Natural killer cell (primary cell): ENCODE measurements at regions of chr12 and their contacts with region 1.

Region 1: GRCh38 chr12:125183187-125184067 is 118.2 kb downstream of the AACS start:
- DNase-seq: peak; percentile 74 to 86
- ATAC-seq: peak; percentile 87 to 93 (median 90)
- H3K4me3 ChIP-seq: no peak overlapping the region
- H3K4me3 Mint-ChIP-seq: peak overlapping the region; percentile 17
- H3K27ac ChIP-seq: no peak overlapping the region
- H3K27ac Mint-ChIP-seq: no peak overlapping the region
- H3K4me1 ChIP-seq: peaks cover 10% of the 10 kb centered on the region
- H3K4me1 Mint-ChIP-seq: peaks cover 0 to 5% of the 10 kb centered on the region in 2 donors
- H3K27me3 ChIP-seq: peaks cover 14% of the 10 kb centered on the region
- H3K27me3 Mint-ChIP-seq: peaks cover 33 to 36% of the 10 kb centered on the region in 2 donors
- CTCF ChIP-seq: peak; percentile 99

Region 2: DNA sequence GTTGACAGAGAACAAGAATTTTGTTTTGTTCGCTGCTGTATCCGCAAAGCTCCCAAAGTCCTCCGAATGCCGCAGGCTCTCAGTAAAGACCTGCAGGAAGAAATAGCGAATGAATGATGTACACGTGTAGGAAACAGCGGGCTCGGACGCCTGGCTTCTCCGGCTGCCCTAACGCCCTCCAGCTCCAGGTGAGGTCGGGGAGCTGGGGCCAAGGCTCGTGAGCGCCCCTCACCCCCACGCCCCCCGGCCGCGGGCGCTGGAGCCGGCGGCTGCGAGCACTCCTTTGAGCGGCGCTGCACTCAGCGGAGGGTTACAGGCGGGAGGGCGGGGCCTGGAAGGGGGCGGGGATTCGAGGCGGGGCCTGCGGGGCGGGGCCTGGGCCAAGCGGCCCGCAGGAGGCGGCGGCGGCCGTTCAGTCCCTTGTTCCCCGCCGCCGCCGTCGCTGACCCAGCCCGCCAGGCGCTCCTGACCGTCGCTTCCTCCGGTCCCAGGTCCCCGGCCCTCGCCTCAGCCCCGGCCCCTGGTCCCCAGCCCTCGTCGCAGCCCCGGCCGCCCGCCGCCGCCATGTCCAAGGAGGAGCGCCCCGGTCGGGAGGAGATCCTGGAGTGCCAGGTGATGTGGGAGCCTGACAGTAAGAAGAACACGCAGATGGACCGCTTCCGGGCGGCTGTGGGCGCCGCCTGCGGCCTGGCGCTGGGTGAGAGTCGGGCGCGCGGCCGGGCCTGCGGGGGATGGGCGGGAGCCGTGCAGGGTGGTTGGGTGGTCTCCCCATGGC is 118.2 kb before region 1 on chr12 and contains the start of gene AACS:
- intact Hi-C with region 1: no loop called
- DNase-seq: peak; percentile 64 to 86
- ATAC-seq: peak; percentile 98
- H3K4me3 ChIP-seq: peak within 1 kb of the TSS; percentile 55
- H3K4me3 Mint-ChIP-seq: peak within 1 kb of the TSS; percentile 89
- H3K27ac ChIP-seq: no peak within 1 kb of the TSS
- H3K27ac Mint-ChIP-seq: peak within 1 kb of the TSS in 1 of 2 donors; percentile 78
- H3K4me1 ChIP-seq: peaks cover 12% of the 10 kb centered on the region
- H3K4me1 Mint-ChIP-seq: peaks cover 8 to 23% of the 10 kb centered on the region in 2 donors
- H3K27me3 ChIP-seq: no peaks in the 10 kb centered on the region
- H3K27me3 Mint-ChIP-seq: peaks cover 0 to 7% of the 10 kb centered on the region in 2 donors
- CTCF ChIP-seq: no peak
- total RNA-seq, gene AACS: 14.6 to 20.4 (median 18.1) TPM

Region 3: GRCh38 chr12:125402874-125403789 is 219.7 kb after region 1 on chr12:
- intact Hi-C with region 1: loop called (anchors 2 kb)
- DNase-seq: peak in 1 of 2 donors; percentile 30
- ATAC-seq: no peak
- H3K4me3 ChIP-seq: no peak overlapping the region
- H3K4me3 Mint-ChIP-seq: no peak overlapping the region
- H3K27ac ChIP-seq: no peak overlapping the region
- H3K27ac Mint-ChIP-seq: no peak overlapping the region
- H3K4me1 ChIP-seq: no peaks in the 10 kb centered on the region
- H3K4me1 Mint-ChIP-seq: no peaks in the 10 kb centered on the region
- H3K27me3 ChIP-seq: no peaks in the 10 kb centered on the region
- H3K27me3 Mint-ChIP-seq: peaks cover 2 to 8% of the 10 kb centered on the region in 2 donors
- CTCF ChIP-seq: peak; percentile 31

Region 4: DNA sequence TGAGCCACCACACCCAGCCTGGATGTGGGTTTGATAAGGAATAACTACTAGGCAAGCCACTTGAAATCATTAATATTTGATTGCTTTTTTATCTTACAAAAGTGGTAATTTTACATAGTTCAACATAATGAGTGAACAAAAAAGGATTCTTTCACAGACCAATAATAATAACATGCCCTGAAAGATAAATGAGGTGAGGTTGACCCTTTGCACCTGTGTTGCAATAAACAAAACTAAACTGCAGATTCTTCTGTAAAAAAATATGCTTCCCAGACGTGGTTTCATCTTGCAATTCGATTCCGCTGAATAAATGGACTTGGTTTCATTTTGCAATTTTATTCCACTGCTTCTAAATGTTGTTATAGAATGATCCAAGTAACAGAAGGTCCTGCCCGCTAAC is 1568.6 kb after region 1 on chr12:
- intact Hi-C with region 1: loop called (anchors 10 kb)
- DNase-seq: no peak
- ATAC-seq: no peak
- H3K4me3 ChIP-seq: no peak overlapping the region
- H3K4me3 Mint-ChIP-seq: no peak overlapping the region
- H3K27ac ChIP-seq: no peak overlapping the region
- H3K27ac Mint-ChIP-seq: no peak overlapping the region
- H3K4me1 ChIP-seq: no peaks in the 10 kb centered on the region
- H3K4me1 Mint-ChIP-seq: no peaks in the 10 kb centered on the region
- H3K27me3 ChIP-seq: no peaks in the 10 kb centered on the region
- H3K27me3 Mint-ChIP-seq: peaks cover 0 to 3% of the 10 kb centered on the region in 2 donors
- CTCF ChIP-seq: no peak

Region 5: DNA sequence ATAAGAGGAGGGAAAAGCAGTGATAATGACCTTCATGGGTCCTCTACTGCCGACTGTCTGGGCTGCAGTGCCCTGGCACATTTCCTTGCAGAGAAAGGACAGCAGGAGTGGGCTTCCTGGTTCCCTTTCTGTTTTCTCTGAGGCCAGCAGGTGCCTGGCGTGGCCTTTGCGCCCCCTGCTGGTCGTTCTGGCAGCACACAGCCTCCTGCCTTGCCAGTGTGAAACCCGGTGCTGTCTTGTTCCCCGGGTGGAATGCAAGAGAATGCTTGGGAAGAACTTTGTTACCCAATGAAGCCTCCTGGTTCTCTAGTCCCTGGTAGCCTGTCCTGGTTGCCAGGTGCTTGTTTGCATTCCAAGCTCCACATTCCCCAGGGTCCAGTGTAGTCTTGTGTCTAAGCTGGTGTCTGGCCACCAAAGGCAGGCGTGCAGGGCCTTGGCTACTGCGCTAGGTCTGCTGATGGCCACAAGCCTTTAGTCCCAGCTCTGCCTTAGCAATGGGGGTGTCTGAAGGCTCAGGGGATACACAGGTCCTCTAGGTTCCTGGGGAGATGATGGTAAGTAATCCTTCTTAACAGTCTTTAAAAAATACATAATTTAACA is 1691.1 kb after region 1 on chr12:
- intact Hi-C with region 1: loop called (anchors 10 kb)
- DNase-seq: peak; percentile 44 to 75
- ATAC-seq: peak in 1 of 3 donors; percentile 57
- H3K4me3 ChIP-seq: no peak overlapping the region
- H3K4me3 Mint-ChIP-seq: no peak overlapping the region
- H3K27ac ChIP-seq: no peak overlapping the region
- H3K27ac Mint-ChIP-seq: no peak overlapping the region
- H3K4me1 ChIP-seq: peaks cover 5% of the 10 kb centered on the region
- H3K4me1 Mint-ChIP-seq: peaks cover 0 to 4% of the 10 kb centered on the region in 2 donors
- H3K27me3 ChIP-seq: no peaks in the 10 kb centered on the region
- H3K27me3 Mint-ChIP-seq: no peaks in the 10 kb centered on the region
- CTCF ChIP-seq: peak; percentile 52